Endothelial cell of umbilical vein (primary cell): ENCODE measurements at regions of chr2 and their contacts with region 1.

Region 1: GRCh38 chr2:47323009-47323821 is 79.7 kb upstream of the MSH2 start:
- DNase-seq: peak; percentile 71
- H3K4me3 ChIP-seq: no peak overlapping the region
- H3K27ac ChIP-seq: no peak overlapping the region
- H3K4me1 ChIP-seq: no peaks in the 10 kb centered on the region
- H3K27me3 ChIP-seq: no peaks in the 10 kb centered on the region
- CTCF ChIP-seq: peak; percentile 89 to 90
- POLR2A ChIP-seq: no peak

Region 2: DNA sequence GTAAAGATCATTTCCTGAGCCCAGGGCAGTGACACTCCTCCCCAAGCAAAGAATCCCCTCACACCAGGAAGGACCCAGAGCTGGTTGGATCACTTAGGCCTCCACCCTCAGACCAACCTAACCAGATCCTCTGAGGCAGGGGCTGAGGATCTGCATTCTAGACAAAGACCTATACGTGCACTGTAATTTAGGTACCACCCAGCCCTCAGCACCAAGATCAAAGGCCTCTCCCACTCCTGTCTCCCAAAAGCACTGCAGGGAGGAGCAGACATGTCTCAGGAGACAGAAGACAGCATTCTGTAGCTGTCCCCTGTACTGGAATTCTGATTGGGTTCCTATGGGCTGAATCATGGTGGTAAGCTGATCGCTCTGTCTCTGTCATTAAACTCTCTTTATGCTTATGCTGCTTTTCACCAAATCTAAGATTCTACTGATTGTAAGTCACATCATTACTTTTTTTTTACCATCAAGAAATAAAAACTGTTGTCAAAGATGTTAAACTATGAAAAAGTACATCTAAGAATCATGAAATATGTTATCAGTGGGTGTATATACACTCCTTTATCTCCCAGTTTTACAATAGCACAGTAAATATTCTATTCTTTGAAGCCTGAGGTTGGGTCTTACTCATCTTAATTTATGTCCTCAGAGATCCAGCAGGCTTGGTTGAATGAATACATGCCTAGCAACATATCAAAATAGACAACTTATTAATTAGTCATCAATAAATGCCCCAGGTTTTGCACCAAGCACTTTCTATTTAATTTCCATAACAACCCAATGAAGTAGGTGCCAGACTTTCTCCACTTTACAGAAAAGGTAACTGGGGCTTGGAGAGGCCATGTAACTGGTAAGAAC is 436.0 kb before region 1 on chr2:
- CTCF ChIA-PET with region 1: interaction called, 13 read pairs
- POLR2A ChIA-PET with region 1: no interaction called
- dilution Hi-C with region 1: no loop called
- intact Hi-C with region 1: loop called (anchors 1 kb)
- DNase-seq: no peak
- H3K4me3 ChIP-seq: no peak overlapping the region
- H3K27ac ChIP-seq: no peak overlapping the region
- H3K4me1 ChIP-seq: peaks cover 6% of the 10 kb centered on the region
- H3K27me3 ChIP-seq: no peaks in the 10 kb centered on the region
- CTCF ChIP-seq: no peak
- POLR2A ChIP-seq: no peak

Region 3: DNA sequence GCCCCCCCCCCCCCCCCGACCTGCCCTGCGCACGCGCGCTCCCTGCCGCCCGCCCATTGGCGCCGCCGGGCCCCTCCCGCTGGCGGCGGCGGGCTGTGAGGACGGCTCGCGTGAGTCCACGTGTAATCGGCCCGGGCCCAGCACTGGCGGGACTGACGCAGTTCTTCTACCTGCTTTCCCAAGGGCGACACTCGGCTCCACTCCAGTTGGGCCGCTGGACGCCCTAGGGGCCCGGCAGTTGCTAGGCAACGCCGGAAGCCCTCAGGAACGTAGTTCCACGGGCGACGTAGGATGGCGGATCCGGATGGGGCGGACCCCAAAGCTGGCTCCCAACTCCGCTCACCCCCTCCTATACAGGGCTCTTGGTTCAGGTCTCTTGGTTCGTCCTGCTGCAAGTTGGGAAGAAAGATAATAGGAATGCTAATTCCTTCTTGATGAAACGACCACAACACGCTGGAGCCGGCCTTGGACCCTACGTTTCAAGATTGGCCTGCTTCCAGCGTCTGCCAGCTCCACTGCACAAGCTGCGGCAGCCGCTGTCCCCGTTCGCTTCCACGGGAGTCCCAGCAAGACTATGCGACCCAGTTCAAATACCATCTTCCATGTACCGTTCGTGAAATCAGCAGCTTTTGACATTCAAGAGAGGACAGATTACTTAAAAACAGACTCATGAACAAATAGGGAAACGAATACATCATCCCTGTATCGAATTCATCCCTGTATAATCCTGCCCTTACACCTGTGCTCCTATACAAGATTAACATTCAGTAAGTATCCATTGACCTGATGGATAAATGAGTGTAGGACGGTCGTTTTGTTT is 407.2 kb before region 1 on chr2:
- CTCF ChIA-PET with region 1: interaction called, 71 read pairs
- POLR2A ChIA-PET with region 1: no interaction called
- dilution Hi-C with region 1: no loop called
- intact Hi-C with region 1: loop called (anchors 1 kb)
- DNase-seq: peak; percentile 91
- H3K4me3 ChIP-seq: peak overlapping the region; percentile 12 to 72 (median 67)
- H3K27ac ChIP-seq: peak overlapping the region; percentile 83
- H3K4me1 ChIP-seq: peaks cover 26% of the 10 kb centered on the region
- H3K27me3 ChIP-seq: no peaks in the 10 kb centered on the region
- CTCF ChIP-seq: no peak
- POLR2A ChIP-seq: peak; percentile 46

Region 4: GRCh38 chr2:46937471-46937901 is 385.7 kb before region 1 on chr2:
- CTCF ChIA-PET with region 1: interaction called, 16 read pairs
- POLR2A ChIA-PET with region 1: no interaction called
- dilution Hi-C with region 1: no loop called
- intact Hi-C with region 1: no loop called
- DNase-seq: no peak
- H3K4me3 ChIP-seq: no peak overlapping the region
- H3K27ac ChIP-seq: no peak overlapping the region
- H3K4me1 ChIP-seq: peaks cover 11% of the 10 kb centered on the region
- H3K27me3 ChIP-seq: no peaks in the 10 kb centered on the region
- CTCF ChIP-seq: peak; percentile 15 to 32
- POLR2A ChIP-seq: no peak

Region 5: GRCh38 chr2:47088668-47089462 is 234.3 kb before region 1 on chr2:
- CTCF ChIA-PET with region 1: interaction called, 10 read pairs
- POLR2A ChIA-PET with region 1: no interaction called
- dilution Hi-C with region 1: no loop called
- intact Hi-C with region 1: no loop called
- DNase-seq: peak; percentile 95
- H3K4me3 ChIP-seq: no peak overlapping the region
- H3K27ac ChIP-seq: peak overlapping the region; percentile 93
- H3K4me1 ChIP-seq: peaks cover 52% of the 10 kb centered on the region
- H3K27me3 ChIP-seq: no peaks in the 10 kb centered on the region
- CTCF ChIP-seq: no peak
- POLR2A ChIP-seq: peak; percentile 31

Region 6: GRCh38 chr2:47309952-47310800 is 13.0 kb before region 1 on chr2:
- CTCF ChIA-PET with region 1: interaction called, 22 read pairs
- POLR2A ChIA-PET with region 1: no interaction called
- dilution Hi-C with region 1: no loop called
- intact Hi-C with region 1: no loop called
- DNase-seq: no peak
- H3K4me3 ChIP-seq: no peak overlapping the region
- H3K27ac ChIP-seq: no peak overlapping the region
- H3K4me1 ChIP-seq: no peaks in the 10 kb centered on the region
- H3K27me3 ChIP-seq: no peaks in the 10 kb centered on the region
- CTCF ChIP-seq: no peak
- POLR2A ChIP-seq: no peak